Ascending aorta (tissue), 2 donors: ENCODE measurements at regions of chr19 and their contacts with region 1.

Region 1: DNA sequence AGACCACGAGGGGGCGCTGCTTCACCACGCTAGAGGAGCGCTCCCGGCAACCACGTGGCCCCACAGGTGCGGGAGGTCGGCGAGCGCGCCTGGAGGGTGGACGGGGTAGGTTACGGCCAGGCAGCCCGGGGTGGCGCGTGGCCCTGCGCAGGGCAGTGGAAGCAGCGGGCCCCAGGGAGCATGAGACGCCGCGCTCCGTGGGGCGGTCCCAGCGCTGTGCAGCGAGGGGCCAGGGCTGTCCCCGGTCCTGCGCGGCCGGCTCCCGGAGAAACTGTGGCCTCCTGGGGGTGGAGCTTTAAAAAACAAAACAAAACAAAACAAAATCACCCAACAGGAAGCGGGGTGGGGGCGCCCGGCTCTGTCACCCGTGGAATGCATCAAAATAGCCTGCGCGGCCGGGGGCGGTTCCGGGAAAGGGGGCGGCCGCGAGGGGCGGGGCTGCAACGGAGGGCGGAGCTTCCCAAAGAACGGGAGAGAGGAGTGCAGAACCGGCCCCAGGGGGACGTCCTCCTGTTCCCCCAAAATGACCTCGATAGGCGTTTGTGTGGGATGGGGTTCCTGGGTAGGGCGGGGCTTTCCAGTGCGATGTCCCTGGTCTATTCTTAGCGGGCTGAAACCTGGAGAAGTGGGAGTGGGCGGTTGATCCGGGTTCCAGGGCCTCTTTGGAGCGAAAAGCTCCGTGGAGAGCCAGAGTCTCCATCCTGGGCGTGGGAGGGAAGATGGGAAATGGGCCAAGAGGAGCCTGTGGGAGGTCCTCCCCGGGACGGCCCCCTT is 27.3 kb downstream of the NUMBL start:
- DNase-seq: peak; percentile 40 to 95
- H3K4me3 ChIP-seq: peak overlapping the region; percentile 64 to 77
- H3K27ac ChIP-seq: peak overlapping the region; percentile 80 to 84
- H3K4me1 ChIP-seq: peaks cover 3 to 13% of the 10 kb centered on the region in 2 donors
- H3K27me3 ChIP-seq: no peaks in the 10 kb centered on the region
- CTCF ChIP-seq: peak in 2 of 3 experiments; percentile 99 to 100

Region 2: GRCh38 chr19:40750059-40750873 is 87.2 kb after region 1 on chr19 and contains the start of gene ACTMAP:
- intact Hi-C with region 1: loop called (anchors 1 kb)
- DNase-seq: peak; percentile 99 to 100
- H3K4me3 ChIP-seq: peak within 1 kb of the TSS; percentile 65 to 80
- H3K27ac ChIP-seq: peak within 1 kb of the TSS; percentile 89 to 93
- H3K4me1 ChIP-seq: peaks cover 12 to 32% of the 10 kb centered on the region in 2 donors
- H3K27me3 ChIP-seq: no peaks in the 10 kb centered on the region
- CTCF ChIP-seq: no peak
- total RNA-seq, gene ACTMAP: 8.3 TPM

Region 3: GRCh38 chr19:40811478-40812341 is 148.6 kb after region 1 on chr19:
- intact Hi-C with region 1: loop called (anchors 2 kb)
- DNase-seq: no peak
- H3K4me3 ChIP-seq: peak overlapping the region; percentile 51 to 64
- H3K27ac ChIP-seq: peak overlapping the region; percentile 63 to 71
- H3K4me1 ChIP-seq: peaks cover 0 to 29% of the 10 kb centered on the region in 2 donors
- H3K27me3 ChIP-seq: no peaks in the 10 kb centered on the region
- CTCF ChIP-seq: no peak

Region 4: GRCh38 chr19:41144403-41144802 is 481.3 kb after region 1 on chr19:
- intact Hi-C with region 1: loop called (anchors 5 kb)
- DNase-seq: peak in 1 of 2 donors; percentile 88
- H3K4me3 ChIP-seq: no peak overlapping the region
- H3K27ac ChIP-seq: no peak overlapping the region
- H3K4me1 ChIP-seq: no peaks in the 10 kb centered on the region
- H3K27me3 ChIP-seq: no peaks in the 10 kb centered on the region
- CTCF ChIP-seq: peak; percentile 50 to 67 (median 57)